ENCODE measurements at regions of chr4 and their contacts with region 1.

Region 1: GRCh38 chr4:92387459-92388069 is 83.8 kb downstream of the GRID2 start:
- DNase-seq: no peak
- ATAC-seq: no peak
- H3K4me3 Mint-ChIP-seq: no peak overlapping the region
- H3K27ac Mint-ChIP-seq: no peak overlapping the region
- H3K4me1 Mint-ChIP-seq: no peaks in the 10 kb centered on the region
- H3K27me3 Mint-ChIP-seq: no peaks in the 10 kb centered on the region

Region 2: DNA sequence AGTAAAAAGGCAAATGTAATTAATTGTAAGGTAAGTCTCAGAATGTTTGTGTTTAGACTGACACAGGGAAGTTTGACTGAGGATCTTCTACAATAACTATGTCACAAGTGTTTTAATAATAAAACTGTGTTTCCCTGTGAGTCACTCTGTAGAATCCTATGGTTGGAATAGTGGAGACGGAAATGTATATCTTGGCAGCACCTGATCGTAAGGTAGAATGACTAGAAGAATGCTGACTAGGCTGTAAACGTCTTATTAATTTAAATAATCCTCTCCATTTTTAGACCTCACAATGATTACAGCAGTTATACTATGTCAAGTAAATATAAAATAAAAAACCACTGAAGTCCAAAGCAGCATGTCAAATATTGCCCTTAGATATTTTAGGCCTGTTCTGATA is 1994.3 kb before region 1 on chr4:
- CTCF ChIA-PET with region 1: no interaction called
- POLR2A ChIA-PET with region 1: no interaction called
- intact Hi-C with region 1: no loop called
- DNase-seq: no peak
- ATAC-seq: no peak
- H3K4me3 Mint-ChIP-seq: no peak overlapping the region
- H3K27ac Mint-ChIP-seq: no peak overlapping the region
- H3K4me1 Mint-ChIP-seq: no peaks in the 10 kb centered on the region
- H3K27me3 Mint-ChIP-seq: no peaks in the 10 kb centered on the region

Region 3: GRCh38 chr4:90419124-90419711 is 1968.3 kb before region 1 on chr4:
- CTCF ChIA-PET with region 1: no interaction called
- POLR2A ChIA-PET with region 1: no interaction called
- intact Hi-C with region 1: loop called in 1 of 2 experiments (anchors 2 kb)
- DNase-seq: no peak
- ATAC-seq: no peak
- H3K4me3 Mint-ChIP-seq: no peak overlapping the region
- H3K27ac Mint-ChIP-seq: no peak overlapping the region
- H3K4me1 Mint-ChIP-seq: no peaks in the 10 kb centered on the region
- H3K27me3 Mint-ChIP-seq: no peaks in the 10 kb centered on the region

Region 4: GRCh38 chr4:91113130-91113706 is 1274.3 kb before region 1 on chr4:
- CTCF ChIA-PET with region 1: no interaction called
- POLR2A ChIA-PET with region 1: no interaction called
- intact Hi-C with region 1: loop called (anchors 10 kb)
- DNase-seq: no peak
- ATAC-seq: no peak
- H3K4me3 Mint-ChIP-seq: no peak overlapping the region
- H3K27ac Mint-ChIP-seq: no peak overlapping the region
- H3K4me1 Mint-ChIP-seq: no peaks in the 10 kb centered on the region
- H3K27me3 Mint-ChIP-seq: no peaks in the 10 kb centered on the region

Region 5: GRCh38 chr4:92514627-92515026 is 127.1 kb after region 1 on chr4:
- CTCF ChIA-PET with region 1: no interaction called
- POLR2A ChIA-PET with region 1: no interaction called
- intact Hi-C with region 1: no loop called
- DNase-seq: no peak
- ATAC-seq: no peak
- H3K4me3 Mint-ChIP-seq: no peak overlapping the region
- H3K27ac Mint-ChIP-seq: no peak overlapping the region
- H3K4me1 Mint-ChIP-seq: no peaks in the 10 kb centered on the region
- H3K27me3 Mint-ChIP-seq: no peaks in the 10 kb centered on the region

Measured in activated CD4-positive, alpha-beta T cell treated with anti-CD3 and anti-CD28 coated beads for 36 hours (primary cell).